GM10248 (cell line): ENCODE measurements at regions of chr15 and their contacts with region 1.

Region 1: GRCh38 chr15:68154923-68155559 is 50.1 kb downstream of the CALML4 start:
- DNase-seq: peak; percentile 21
- CTCF ChIP-seq: peak; percentile 59

Region 2: DNA sequence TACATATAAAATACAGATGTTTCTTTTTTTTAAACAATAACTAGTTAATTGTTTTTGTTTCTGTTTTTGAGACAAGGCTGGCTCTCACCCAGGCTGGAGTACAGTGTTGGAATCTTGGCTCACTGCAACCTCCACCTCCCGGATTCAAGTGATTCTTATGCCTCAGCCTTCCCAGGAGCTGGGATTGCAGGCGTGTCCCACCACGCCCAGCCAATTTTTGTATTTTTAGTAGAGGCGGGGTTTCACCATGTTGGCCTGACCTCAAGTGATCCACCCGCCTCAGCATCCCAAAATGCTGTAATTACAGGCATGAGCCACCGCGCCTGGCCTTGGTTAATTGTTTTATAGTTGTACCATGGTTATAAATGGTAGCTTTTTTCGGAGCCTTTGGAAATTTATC is 28.6 kb before region 1 on chr15:
- CTCF ChIA-PET with region 1: interaction called, 14 read pairs
- POLR2A ChIA-PET with region 1: no interaction called
- DNase-seq: no peak
- CTCF ChIP-seq: no peak

Region 3: GRCh38 chr15:68143129-68143528 is 11.9 kb before region 1 on chr15:
- CTCF ChIA-PET with region 1: interaction called, 12 read pairs
- POLR2A ChIA-PET with region 1: no interaction called
- DNase-seq: no peak
- CTCF ChIP-seq: no peak

Region 4: GRCh38 chr15:68277131-68277602 is 122.1 kb after region 1 on chr15:
- CTCF ChIA-PET with region 1: no interaction called
- POLR2A ChIA-PET with region 1: no interaction called
- DNase-seq: no peak
- CTCF ChIP-seq: no peak

Region 5: GRCh38 chr15:68783226-68784058 is 628.4 kb after region 1 on chr15:
- CTCF ChIA-PET with region 1: no interaction called
- POLR2A ChIA-PET with region 1: no interaction called
- DNase-seq: peak; percentile 70
- CTCF ChIP-seq: peak; percentile 73